ENCODE measurements at regions of chr14 and their contacts with region 1.

Region 1: DNA sequence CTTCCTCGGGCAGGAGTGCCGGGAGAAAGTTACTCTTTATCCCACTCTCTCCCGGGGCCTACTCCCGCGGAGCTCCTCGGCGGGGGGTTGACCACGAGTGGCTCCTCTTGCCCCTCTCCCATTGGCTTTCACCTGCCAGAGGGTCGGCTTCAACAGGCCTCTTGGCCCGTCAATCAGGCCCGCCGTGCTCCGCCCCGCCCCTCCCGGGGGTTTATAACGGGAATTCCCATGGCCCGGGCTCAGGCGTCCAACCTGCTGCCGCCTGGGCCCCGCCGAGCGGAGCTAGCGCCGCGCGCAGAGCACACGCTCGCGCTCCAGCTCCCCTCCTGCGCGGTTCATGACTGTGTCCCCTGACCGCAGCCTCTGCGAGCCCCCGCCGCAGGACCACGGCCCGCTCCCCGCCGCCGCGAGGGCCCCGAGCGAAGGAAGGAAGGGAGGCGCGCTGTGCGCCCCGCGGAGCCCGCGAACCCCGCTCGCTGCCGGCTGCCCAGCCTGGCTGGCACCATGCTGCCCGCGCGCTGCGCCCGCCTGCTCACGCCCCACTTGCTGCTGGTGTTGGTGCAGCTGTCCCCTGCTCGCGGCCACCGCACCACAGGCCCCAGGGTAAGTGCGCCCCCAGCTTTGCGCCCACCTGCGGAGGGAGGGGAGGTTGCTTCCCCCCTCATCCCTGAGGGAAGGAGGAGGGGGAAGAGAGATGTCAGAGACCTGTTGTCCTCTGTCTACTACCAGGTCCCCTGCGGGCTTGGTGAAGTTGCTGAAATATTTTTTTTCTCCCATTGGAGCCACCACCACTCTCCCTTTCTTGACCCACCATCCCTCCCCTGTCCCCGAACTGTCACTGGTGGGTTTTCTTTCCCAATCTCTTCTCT is at the start of gene SMOC1:
- DNase-seq: peak; percentile 87
- H3K4me3 ChIP-seq: peak within 1 kb of the TSS in 1 of 2 experiments; percentile 50; a peak in 2 of 4 replicates
- H3K27ac ChIP-seq: peak within 1 kb of the TSS in 1 of 2 experiments; percentile 43; a peak in 1 of 4 replicates
- H3K4me1 ChIP-seq: peaks cover 0 to 28% of the 10 kb centered on the region in 2 experiments; a peak in 1 of 4 replicates
- H3K27me3 ChIP-seq: 0 out of 2 replicates have a peak, but pooled peaks cover 13% of the 10 kb centered on the region
- CTCF ChIP-seq: no peak
- EP300 ChIP-seq: no peak
- RAD21 ChIP-seq: no peak
- polyA plus RNA-seq, gene SMOC1: not detected in 2 replicates

Region 2: GRCh38 chr14:69845787-69846186 is 33.6 kb before region 1 on chr14:
- CTCF ChIA-PET with region 1: interaction called, 12 read pairs
- POLR2A ChIA-PET with region 1: no interaction called
- DNase-seq: no peak
- H3K4me3 ChIP-seq: no peak overlapping the region
- H3K27ac ChIP-seq: no peak overlapping the region
- H3K4me1 ChIP-seq: peaks cover 0 to 11% of the 10 kb centered on the region in 2 experiments; a peak in 1 of 4 replicates
- H3K27me3 ChIP-seq: no peaks in the 10 kb centered on the region
- CTCF ChIP-seq: no peak
- EP300 ChIP-seq: no peak
- RAD21 ChIP-seq: no peak

Region 3: DNA sequence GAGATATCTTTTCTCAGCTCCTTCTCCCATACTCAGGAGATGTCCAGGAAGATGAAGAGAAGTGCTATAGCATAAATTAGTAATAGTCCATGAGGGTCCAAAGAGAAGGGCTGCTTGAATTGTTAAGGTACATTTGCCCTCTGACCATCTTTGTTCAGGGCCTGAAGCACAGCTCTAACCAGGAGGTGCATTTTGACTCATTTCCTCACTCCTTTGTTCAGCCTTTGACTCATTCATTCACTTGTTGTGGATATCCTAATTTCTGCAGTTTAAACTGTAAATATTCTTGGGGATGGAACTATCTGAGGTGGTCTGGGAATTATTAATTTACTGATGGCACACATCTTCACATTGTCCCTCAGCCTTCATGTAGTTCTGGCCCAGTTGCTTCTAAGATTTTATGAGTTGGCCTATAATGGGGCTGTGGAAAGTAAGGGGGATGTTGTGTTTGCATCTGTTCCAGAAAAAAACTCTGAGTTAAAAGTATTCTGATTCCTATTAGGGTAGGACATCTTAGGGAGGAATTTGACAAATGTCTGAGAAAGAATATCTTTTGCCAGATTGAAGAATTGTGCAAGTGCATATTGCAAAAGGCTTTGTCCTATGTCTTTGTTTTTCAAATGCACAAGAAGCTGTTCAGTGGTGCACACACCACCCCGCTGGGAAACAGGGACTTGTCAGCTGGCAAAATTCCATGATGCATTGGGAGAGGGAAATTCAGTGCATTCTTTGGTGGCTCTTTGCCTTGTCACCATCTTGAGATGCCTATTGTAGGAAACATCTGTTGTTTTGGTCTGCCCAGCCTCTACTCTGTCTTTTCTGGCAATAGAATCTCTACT is 21.9 kb after region 1 on chr14:
- CTCF ChIA-PET with region 1: interaction called, 10 read pairs
- POLR2A ChIA-PET with region 1: no interaction called
- DNase-seq: no peak
- H3K4me3 ChIP-seq: no peak overlapping the region
- H3K27ac ChIP-seq: no peak overlapping the region
- H3K4me1 ChIP-seq: no peaks in the 10 kb centered on the region
- H3K27me3 ChIP-seq: no peaks in the 10 kb centered on the region
- CTCF ChIP-seq: no peak
- EP300 ChIP-seq: no peak
- RAD21 ChIP-seq: no peak

Region 4: GRCh38 chr14:70013269-70013873 is 134.0 kb after region 1 on chr14:
- CTCF ChIA-PET with region 1: interaction called, 37 read pairs
- POLR2A ChIA-PET with region 1: no interaction called
- DNase-seq: peak; percentile 52
- H3K4me3 ChIP-seq: no peak overlapping the region; a peak in 1 of 4 replicates
- H3K27ac ChIP-seq: no peak overlapping the region
- H3K4me1 ChIP-seq: peaks cover 0 to 14% of the 10 kb centered on the region in 2 experiments; a peak in 1 of 4 replicates
- H3K27me3 ChIP-seq: no peaks in the 10 kb centered on the region; the same call in 1 of the 2 replicates
- CTCF ChIP-seq: peak; percentile 53
- EP300 ChIP-seq: no peak
- RAD21 ChIP-seq: peak; percentile 50

Region 5: DNA sequence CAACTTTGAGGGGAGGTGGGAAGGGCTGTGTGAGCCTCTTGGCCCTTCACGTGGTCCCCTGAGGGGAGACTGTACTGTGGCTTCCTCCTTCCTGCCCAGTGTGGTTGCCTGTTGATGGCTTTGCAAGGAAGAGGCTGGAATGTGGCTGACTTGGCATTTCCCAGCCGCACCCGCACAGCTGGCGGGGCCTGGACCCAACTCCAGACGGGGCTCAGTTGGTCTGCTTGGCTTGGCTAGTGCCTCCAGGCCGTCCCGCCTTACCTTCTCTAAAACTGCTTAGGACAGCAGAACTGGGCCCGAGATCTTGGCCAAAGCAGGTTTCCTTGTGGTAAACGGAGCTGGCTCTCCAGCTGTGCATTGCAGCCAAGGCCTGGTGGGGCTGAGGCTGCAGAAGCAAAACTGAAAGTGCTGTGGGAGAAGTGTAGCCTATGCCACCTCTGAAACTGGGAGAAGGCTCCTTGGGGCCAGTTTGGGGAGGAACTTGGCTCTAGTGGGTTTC is 139.4 kb after region 1 on chr14:
- CTCF ChIA-PET with region 1: interaction called, 37 read pairs
- POLR2A ChIA-PET with region 1: no interaction called
- DNase-seq: no peak
- H3K4me3 ChIP-seq: no peak overlapping the region
- H3K27ac ChIP-seq: no peak overlapping the region
- H3K4me1 ChIP-seq: no peaks in the 10 kb centered on the region
- H3K27me3 ChIP-seq: no peaks in the 10 kb centered on the region; the same call in 1 of the 2 replicates
- CTCF ChIP-seq: no peak
- EP300 ChIP-seq: no peak
- RAD21 ChIP-seq: no peak